Naive thymus-derived CD4-positive, alpha-beta T cell (primary cell): ENCODE measurements at regions of chr20 and their contacts with region 1.

Region 1: GRCh38 chr20:49888345-49888966 is 26.9 kb downstream of the SPATA2 start:
- DNase-seq: peak; percentile 24 to 58 (median 39)
- ATAC-seq: peak; percentile 48
- H3K4me3 ChIP-seq: no peak overlapping the region
- H3K4me3 Mint-ChIP-seq: no peak overlapping the region
- H3K27ac ChIP-seq: no peak overlapping the region
- H3K27ac Mint-ChIP-seq: peak overlapping the region in 5 of 9 donors; percentile 5 to 38 (median 19)
- H3K4me1 ChIP-seq: no peaks in the 10 kb centered on the region
- H3K4me1 Mint-ChIP-seq: peaks cover 0 to 26% (median 5%) of the 10 kb centered on the region in 7 donors
- H3K27me3 ChIP-seq: no peaks in the 10 kb centered on the region
- H3K27me3 Mint-ChIP-seq: no peaks in the 10 kb centered on the region

Region 2: GRCh38 chr20:49541733-49542513 is 346.5 kb before region 1 on chr20:
- CTCF ChIA-PET with region 1: no interaction called
- POLR2A ChIA-PET with region 1: no interaction called
- intact Hi-C with region 1: loop called in 1 of 2 experiments (anchors 1 kb)
- DNase-seq: peak in 8 of 9 donors; percentile 1 to 66 (median 16)
- ATAC-seq: peak; percentile 72
- H3K4me3 ChIP-seq: no peak overlapping the region
- H3K4me3 Mint-ChIP-seq: peak overlapping the region in 1 of 10 donors; percentile 53
- H3K27ac ChIP-seq: no peak overlapping the region
- H3K27ac Mint-ChIP-seq: peak overlapping the region in 1 of 9 donors; percentile 82
- H3K4me1 ChIP-seq: no peaks in the 10 kb centered on the region
- H3K4me1 Mint-ChIP-seq: peaks cover 0 to 32% (median 0%) of the 10 kb centered on the region in 7 donors
- H3K27me3 ChIP-seq: no peaks in the 10 kb centered on the region
- H3K27me3 Mint-ChIP-seq: peaks cover 2 to 15% (median 8%) of the 10 kb centered on the region in 5 donors

Region 3: DNA sequence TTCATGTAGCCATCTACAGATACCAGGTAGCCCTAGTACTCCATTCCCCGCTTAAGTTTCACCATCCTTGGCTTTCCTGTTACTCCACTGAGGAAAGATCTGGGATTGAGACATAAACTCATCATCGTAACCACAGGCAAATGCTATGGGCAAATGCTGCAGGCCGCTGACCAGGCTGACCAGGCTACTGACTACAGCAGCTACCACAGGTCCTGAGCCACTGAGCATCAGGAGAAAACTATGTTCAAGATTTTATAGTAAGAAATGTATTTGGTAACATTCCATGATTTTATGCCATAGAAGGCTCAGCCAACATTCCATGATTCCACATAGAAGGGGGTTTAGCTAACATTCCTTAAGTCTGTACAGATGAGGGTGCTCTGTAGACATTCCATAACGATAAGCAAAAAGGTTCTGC is 158.7 kb before region 1 on chr20:
- CTCF ChIA-PET with region 1: no interaction called
- POLR2A ChIA-PET with region 1: no interaction called
- intact Hi-C with region 1: no loop called
- DNase-seq: no peak
- ATAC-seq: no peak
- H3K4me3 ChIP-seq: no peak overlapping the region
- H3K4me3 Mint-ChIP-seq: no peak overlapping the region
- H3K27ac ChIP-seq: no peak overlapping the region
- H3K27ac Mint-ChIP-seq: no peak overlapping the region
- H3K4me1 ChIP-seq: peaks cover 0 to 6% of the 10 kb centered on the region in 2 donors
- H3K4me1 Mint-ChIP-seq: peaks cover 6 to 12% (median 10%) of the 10 kb centered on the region in 7 donors
- H3K27me3 ChIP-seq: no peaks in the 10 kb centered on the region
- H3K27me3 Mint-ChIP-seq: peaks cover 0 to 22% (median 0%) of the 10 kb centered on the region in 5 donors

Region 4: DNA sequence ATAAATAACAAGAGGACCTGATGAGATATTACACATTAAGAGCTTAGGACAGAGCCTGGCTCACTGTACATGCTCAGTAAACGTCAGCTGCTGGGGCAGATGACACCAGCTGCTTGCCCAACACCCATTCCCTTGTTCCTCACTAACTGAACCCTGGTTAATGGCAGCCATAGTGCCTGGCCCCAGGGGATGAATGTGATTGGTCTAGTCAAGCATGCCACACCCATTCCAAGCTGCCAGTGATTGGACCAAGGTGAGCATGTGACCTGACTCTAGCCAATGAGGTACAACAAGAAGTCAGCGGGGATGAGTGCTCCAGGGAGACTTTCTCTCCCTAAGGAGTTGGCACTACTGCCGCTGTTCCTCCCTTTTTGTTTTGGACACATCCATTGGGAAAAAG is 536.6 kb after region 1 on chr20:
- CTCF ChIA-PET with region 1: no interaction called
- POLR2A ChIA-PET with region 1: no interaction called
- intact Hi-C with region 1: no loop called
- DNase-seq: no peak
- ATAC-seq: peak; percentile 34
- H3K4me3 ChIP-seq: no peak overlapping the region
- H3K4me3 Mint-ChIP-seq: no peak overlapping the region
- H3K27ac ChIP-seq: no peak overlapping the region
- H3K27ac Mint-ChIP-seq: no peak overlapping the region
- H3K4me1 ChIP-seq: no peaks in the 10 kb centered on the region
- H3K4me1 Mint-ChIP-seq: peaks cover 0 to 8% (median 0%) of the 10 kb centered on the region in 7 donors
- H3K27me3 ChIP-seq: no peaks in the 10 kb centered on the region
- H3K27me3 Mint-ChIP-seq: peaks cover 0 to 16% (median 0%) of the 10 kb centered on the region in 5 donors